H1 (cell line): ENCODE measurements at regions of chr17 and their contacts with region 1.

Region 1: DNA sequence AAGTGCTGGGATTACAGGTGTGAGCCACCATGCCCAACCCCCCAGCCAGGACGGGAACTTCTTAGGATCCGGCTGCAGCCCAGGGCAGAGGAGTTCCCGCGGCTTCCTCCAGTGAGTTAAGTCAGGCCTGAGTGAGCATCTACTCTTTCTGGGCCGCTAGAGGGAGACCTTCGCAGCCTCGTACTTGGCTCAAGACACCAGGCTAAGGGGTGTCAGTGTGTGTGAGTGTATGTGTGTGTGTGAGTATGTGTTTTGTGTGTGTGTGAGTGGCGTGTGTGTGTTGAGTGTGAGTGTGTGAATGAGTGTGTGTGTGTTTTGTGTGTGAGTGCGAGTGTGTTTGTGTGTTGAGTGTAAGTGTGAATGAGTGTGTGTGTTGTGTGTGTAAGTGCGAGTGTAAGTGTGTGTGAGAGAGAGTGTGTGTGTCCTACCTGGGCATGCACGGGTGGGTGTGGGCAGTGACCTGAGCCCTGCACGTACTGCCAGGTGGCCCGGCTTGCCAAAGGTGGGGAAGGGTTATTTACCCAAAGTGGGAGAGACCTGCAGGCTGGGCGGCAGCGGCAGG is 58.5 kb downstream of the TMEM235 start:
- DNase-seq: peak; percentile 75 to 76
- H3K4me3 ChIP-seq: no peak overlapping the region
- H3K27ac ChIP-seq: no peak overlapping the region
- H3K4me1 ChIP-seq: no peaks in the 10 kb centered on the region; a peak in 2 of 7 replicates
- H3K27me3 ChIP-seq: no peaks in the 10 kb centered on the region
- CTCF ChIP-seq: peak; percentile 90 to 95 (median 92)
- EP300 ChIP-seq: 0 out of 3 replicates have a peak, but pooled peaks of 1 of the 2 experiments have one; percentile 20
- POLR2A ChIP-seq: no peak
- RAD21 ChIP-seq: peak; percentile 82 to 89

Region 2: GRCh38 chr17:78117027-78117964 is 172.6 kb before region 1 on chr17:
- CTCF ChIA-PET with region 1: no interaction called
- POLR2A ChIA-PET with region 1: no interaction called
- DNase-seq: peak in 1 of 2 experiments; percentile 85
- H3K4me3 ChIP-seq: no peak overlapping the region
- H3K27ac ChIP-seq: no peak overlapping the region
- H3K4me1 ChIP-seq: no peaks in the 10 kb centered on the region; a peak in 1 of 7 replicates
- H3K27me3 ChIP-seq: no peaks in the 10 kb centered on the region
- CTCF ChIP-seq: peak; percentile 68 to 84 (median 75)
- EP300 ChIP-seq: no peak
- POLR2A ChIP-seq: no peak
- RAD21 ChIP-seq: peak; percentile 52 to 70

Region 3: DNA sequence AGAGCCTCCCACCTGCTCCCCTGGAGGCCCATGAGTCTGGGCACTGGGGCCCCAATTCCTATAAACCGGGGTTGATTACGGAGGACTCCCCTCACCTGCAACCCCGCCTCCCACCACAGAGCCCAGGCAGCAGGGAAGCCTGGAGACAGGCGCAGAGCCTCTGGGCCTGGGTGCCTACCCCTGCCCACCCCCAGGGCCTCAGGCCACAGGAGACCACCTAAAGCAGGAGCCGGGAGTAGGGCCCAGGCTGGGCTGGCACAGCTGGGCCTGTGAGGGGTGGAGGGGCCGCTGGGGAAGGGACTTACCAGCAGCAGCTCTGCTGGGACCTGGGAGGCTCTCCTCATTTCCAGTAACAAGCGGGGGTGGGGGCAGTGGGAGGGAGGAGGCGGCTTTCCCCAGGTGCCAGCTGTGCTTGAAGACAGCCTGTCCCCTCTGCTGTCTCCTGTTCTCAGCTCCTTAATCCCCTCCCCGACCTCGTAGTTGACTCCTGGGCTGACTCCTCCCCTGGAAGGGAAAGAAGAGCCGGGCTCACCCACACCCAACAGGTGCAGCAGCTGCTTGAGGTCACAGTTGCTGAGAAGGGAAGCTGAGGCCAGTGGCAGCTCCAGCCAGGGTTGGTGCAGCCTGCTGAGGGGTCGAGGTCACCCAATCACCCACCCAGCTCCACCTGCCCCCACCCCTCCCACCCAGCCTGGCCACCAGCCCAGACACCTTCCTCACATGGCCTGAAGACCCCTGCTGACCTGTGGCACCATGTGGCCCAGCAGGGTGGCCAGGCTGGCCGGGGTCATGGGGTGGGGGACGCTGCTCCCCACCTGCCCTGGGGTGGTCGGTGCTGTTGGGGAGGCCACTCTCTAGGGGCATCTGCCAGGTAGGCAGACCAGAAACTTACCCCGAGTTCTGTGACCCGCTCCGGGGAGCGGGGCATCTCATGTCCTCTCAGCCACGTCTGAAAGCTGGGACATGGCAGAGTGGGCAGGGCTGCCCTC is 11.4 kb before region 1 on chr17:
- CTCF ChIA-PET with region 1: interaction called, 22 read pairs
- POLR2A ChIA-PET with region 1: no interaction called
- DNase-seq: no peak
- H3K4me3 ChIP-seq: no peak overlapping the region
- H3K27ac ChIP-seq: no peak overlapping the region
- H3K4me1 ChIP-seq: peaks cover 0 to 18% (median 12%) of the 10 kb centered on the region in 4 experiments; a peak in 5 of 7 replicates
- H3K27me3 ChIP-seq: no peaks in the 10 kb centered on the region
- CTCF ChIP-seq: no peak
- EP300 ChIP-seq: no peak
- POLR2A ChIP-seq: no peak
- RAD21 ChIP-seq: no peak

Region 4: GRCh38 chr17:78307872-78308638 is 18.2 kb after region 1 on chr17:
- CTCF ChIA-PET with region 1: interaction called, 22 read pairs
- POLR2A ChIA-PET with region 1: no interaction called
- DNase-seq: no peak
- H3K4me3 ChIP-seq: no peak overlapping the region
- H3K27ac ChIP-seq: no peak overlapping the region
- H3K4me1 ChIP-seq: no peaks in the 10 kb centered on the region
- H3K27me3 ChIP-seq: peaks cover 0 to 2% (median 0%) of the 10 kb centered on the region in 4 experiments; a peak in 2 of 7 replicates
- CTCF ChIP-seq: peak; percentile 39 to 42 (median 41)
- EP300 ChIP-seq: no peak
- POLR2A ChIP-seq: no peak
- RAD21 ChIP-seq: peak in 1 of 2 experiments; percentile 35; a peak in 2 of 4 replicates